HepG2 (cell line): ENCODE measurements at regions of chr11 and their contacts with region 1.

Region 1: DNA sequence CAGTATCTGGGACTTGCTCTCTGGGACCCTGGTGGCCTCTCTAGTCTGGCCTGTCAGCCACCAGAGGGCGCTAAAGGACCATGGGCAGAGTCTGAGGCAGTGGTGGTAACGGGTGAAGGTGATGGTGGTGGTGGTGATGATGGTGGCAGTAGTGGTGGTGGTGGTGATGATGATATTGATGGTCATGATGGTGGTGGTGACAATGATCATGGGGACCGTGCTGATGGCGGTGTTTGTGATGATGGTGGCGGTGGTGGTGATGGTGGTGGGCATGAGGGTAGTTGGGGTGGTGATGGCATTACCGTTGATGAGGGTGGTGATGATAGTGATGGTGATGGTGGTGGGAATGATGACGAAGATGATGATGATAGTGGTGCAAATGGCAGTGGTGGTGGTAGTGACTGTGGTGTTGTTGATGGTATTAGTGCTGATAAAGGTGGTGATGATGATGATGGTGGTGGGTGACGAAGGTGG is 16.0 kb downstream of the TRPM5 start:
- DNase-seq: peak; percentile 61
- ATAC-seq: peak; percentile 85
- H3K4me3 ChIP-seq: no peak overlapping the region
- H3K27ac ChIP-seq: no peak overlapping the region
- H3K4me1 ChIP-seq: no peaks in the 10 kb centered on the region
- H3K27me3 ChIP-seq: peaks cover 15 to 58% of the 10 kb centered on the region in 2 experiments
- CTCF ChIP-seq: peak; percentile 95
- EP300 ChIP-seq: no peak
- POLR2A ChIP-seq: no peak
- RAD21 ChIP-seq: peak; percentile 90

Region 2: GRCh38 chr11:2526808-2527381 is 98.5 kb after region 1 on chr11:
- CTCF ChIA-PET with region 1: interaction called, 111 read pairs
- POLR2A ChIA-PET with region 1: no interaction called
- in situ Hi-C with region 1: loop called (anchors 5 kb)
- intact Hi-C with region 1: no loop called
- DNase-seq: no peak
- ATAC-seq: peak; percentile 52
- H3K4me3 ChIP-seq: peak overlapping the region in 2 of 3 experiments; percentile 29 to 48; a peak in 3 of 6 replicates
- H3K27ac ChIP-seq: no peak overlapping the region
- H3K4me1 ChIP-seq: peaks cover 10% of the 10 kb centered on the region; the same call in 1 of the 2 replicates
- H3K27me3 ChIP-seq: peaks cover 20 to 81% of the 10 kb centered on the region in 2 experiments
- CTCF ChIP-seq: peak; percentile 35; the same call in 1 of the 2 replicates
- EP300 ChIP-seq: no peak
- POLR2A ChIP-seq: no peak
- RAD21 ChIP-seq: no peak

Region 3: GRCh38 chr11:2892215-2893020 is 464.1 kb after region 1 on chr11:
- CTCF ChIA-PET with region 1: no interaction called
- POLR2A ChIA-PET with region 1: no interaction called
- in situ Hi-C with region 1: loop called (anchors 5 kb)
- intact Hi-C with region 1: loop called (anchors 2 kb)
- DNase-seq: no peak
- ATAC-seq: peak; percentile 67
- H3K4me3 ChIP-seq: peak overlapping the region in 1 of 3 experiments; percentile 11; a peak in 2 of 6 replicates
- H3K27ac ChIP-seq: no peak overlapping the region
- H3K4me1 ChIP-seq: peaks cover 39% of the 10 kb centered on the region
- H3K27me3 ChIP-seq: peaks cover 3 to 18% of the 10 kb centered on the region in 2 experiments; a peak in 4 of 5 replicates
- CTCF ChIP-seq: peak; percentile 99
- EP300 ChIP-seq: no peak
- POLR2A ChIP-seq: no peak
- RAD21 ChIP-seq: peak; percentile 93

Region 4: DNA sequence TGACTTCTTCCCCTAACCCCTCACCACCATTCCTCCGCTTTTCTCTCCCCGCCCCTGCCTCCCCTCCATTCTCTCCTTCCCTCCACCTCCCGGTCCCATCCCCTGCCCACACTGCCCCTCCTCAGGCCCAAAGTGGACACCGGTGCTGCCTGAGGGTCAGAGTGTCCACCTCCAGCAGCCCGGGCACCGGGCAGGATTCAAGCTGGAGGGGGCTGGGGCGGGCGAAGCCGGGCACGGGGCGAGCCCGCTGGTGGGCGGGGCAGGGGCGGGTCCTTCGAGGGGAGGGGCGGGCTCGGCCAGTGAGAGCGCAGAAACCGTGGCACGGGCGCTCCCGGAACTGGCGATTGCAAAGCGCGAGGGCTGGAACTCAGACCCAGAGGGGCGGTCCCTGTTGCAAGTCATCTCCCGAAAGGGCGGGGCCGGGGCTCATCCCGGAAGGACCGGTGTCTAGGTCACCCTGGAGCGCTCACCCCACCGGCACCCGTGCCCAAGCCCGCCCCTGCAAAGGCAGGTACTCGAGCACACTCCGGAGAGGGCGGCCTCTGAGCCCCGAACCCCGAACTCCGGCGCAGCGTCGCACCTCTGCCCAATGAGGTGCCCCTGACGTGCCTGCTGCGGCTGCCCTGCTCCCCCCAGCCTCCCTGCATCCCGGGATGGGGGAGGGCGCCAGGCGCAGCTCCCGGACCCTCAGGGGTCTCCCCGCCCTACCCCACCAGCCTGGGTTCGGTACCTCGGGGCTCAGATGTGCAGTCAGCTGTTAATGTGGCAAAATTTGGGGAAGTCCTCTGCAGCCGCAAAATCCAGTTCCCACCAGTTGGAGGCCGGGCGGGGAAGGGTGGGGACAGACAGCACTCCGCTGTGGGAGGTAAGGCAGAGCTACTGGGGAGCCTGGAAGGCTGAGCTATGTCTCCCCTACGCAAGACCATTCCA is 473.8 kb after region 1 on chr11:
- CTCF ChIA-PET with region 1: no interaction called
- POLR2A ChIA-PET with region 1: no interaction called
- in situ Hi-C with region 1: loop called (anchors 5 kb)
- intact Hi-C with region 1: no loop called
- DNase-seq: peak; percentile 90
- ATAC-seq: peak; percentile 87
- H3K4me3 ChIP-seq: peak overlapping the region; percentile 76 to 92 (median 84)
- H3K27ac ChIP-seq: peak overlapping the region; percentile 78
- H3K4me1 ChIP-seq: peaks cover 28% of the 10 kb centered on the region
- H3K27me3 ChIP-seq: no peaks in the 10 kb centered on the region; a peak in 2 of 5 replicates
- CTCF ChIP-seq: no peak
- EP300 ChIP-seq: no peak
- POLR2A ChIP-seq: peak in 1 of 2 experiments; percentile 33; a peak in 1 of 4 replicates
- RAD21 ChIP-seq: peak; percentile 23; the same call in 1 of the 2 replicates